ENCODE measurements at regions of chr15 and their contacts with region 1.

Region 1: DNA sequence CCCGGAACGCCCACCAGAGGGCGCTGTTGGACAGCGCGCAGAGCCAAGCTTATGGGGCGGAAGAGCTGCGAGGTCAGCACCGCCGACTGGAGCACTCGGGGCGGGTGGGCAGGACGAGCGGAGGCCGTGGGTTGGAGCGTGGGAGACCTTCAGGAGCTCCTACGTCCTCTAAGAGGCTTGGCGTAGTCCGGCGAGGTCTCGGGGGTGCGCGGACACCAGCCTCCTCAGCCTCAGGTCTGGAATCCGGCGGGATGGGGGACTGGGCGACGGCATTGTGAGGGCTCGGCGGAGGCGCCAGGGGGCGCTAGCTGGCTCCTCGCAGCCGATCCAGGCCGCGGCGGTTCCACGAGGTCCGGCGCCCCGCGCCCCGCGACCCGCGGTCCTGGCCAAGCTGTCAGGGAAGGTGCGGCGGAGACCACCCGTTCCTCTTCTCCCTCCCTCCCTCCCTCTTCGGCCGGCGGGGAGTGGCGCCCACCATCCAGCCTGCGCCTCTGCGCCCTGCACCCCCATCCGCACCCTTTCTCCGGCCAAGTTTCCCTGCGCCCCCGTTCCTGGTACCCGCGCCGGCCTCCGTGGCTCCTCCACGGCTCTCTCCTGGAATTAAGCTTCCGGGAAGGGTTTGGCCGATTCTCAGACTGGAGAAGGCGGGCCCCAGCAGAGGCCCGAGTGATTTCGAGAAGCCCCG is 24.3 kb upstream of the POLG start:
- DNase-seq: no peak
- H3K4me3 ChIP-seq: peak overlapping the region; percentile 64
- CTCF ChIP-seq: peak; percentile 96

Region 2: DNA sequence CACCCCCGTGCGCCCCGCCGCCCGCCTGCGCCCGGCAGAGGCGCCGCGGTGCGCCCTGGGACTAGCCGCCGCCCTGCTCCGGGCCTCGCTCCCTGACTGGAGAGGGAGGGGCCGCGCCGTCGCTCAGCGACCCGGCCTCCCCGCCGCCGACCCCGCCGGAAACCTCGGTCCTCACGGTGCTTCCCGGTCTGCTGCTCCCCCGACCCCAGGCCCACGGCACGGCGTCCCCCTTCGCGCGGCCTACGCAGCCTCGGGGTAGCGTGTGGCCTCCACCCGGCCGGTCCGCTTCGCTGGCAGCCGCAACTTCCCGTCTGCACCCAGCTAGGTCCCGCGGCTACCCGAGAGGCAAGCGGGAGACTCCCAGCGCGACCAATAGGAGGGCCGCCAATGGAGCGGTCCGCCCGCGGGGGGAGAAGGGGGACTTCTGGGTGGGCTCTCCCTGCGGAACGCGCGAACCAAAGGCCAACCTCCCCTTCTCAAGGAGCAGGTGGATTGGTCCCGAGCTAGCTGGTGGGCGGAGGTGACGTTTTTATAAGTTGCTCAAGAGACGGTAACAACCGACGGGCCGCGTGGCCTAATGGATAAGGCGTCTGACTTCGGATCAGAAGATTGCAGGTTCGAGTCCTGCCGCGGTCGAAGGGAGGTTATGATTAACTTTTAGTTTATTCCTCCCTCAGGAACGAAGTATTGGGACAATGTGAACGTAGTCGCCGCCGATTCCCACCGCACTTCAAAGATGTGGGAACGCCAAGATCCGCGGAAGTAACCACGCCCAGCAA is 24.2 kb before region 1 on chr15 and contains the start of gene POLG:
- CTCF ChIA-PET with region 1: interaction called, 278 read pairs
- POLR2A ChIA-PET with region 1: interaction called, 4 read pairs
- DNase-seq: peak; percentile 97
- H3K4me3 ChIP-seq: peak within 1 kb of the TSS; percentile 87
- CTCF ChIP-seq: no peak

Region 3: GRCh38 chr15:89416141-89416853 is 57.4 kb after region 1 on chr15:
- CTCF ChIA-PET with region 1: interaction called, 115 read pairs
- POLR2A ChIA-PET with region 1: no interaction called
- DNase-seq: no peak
- H3K4me3 ChIP-seq: no peak overlapping the region
- CTCF ChIP-seq: peak; percentile 74

Region 4: GRCh38 chr15:89442671-89443307 is 83.9 kb after region 1 on chr15:
- CTCF ChIA-PET with region 1: interaction called, 96 read pairs
- POLR2A ChIA-PET with region 1: no interaction called
- DNase-seq: no peak
- H3K4me3 ChIP-seq: no peak overlapping the region
- CTCF ChIP-seq: peak; percentile 57

Region 5: GRCh38 chr15:89485855-89486361 is 127.0 kb after region 1 on chr15:
- CTCF ChIA-PET with region 1: interaction called, 20 read pairs
- POLR2A ChIA-PET with region 1: no interaction called
- DNase-seq: no peak
- H3K4me3 ChIP-seq: no peak overlapping the region
- CTCF ChIP-seq: no peak

Measured in AG04449 (cell line).